ENCODE measurements at regions of chr15 and their contacts with region 1.

Region 1: GRCh38 chr15:73240866-73241499 is 127.8 kb downstream of the HCN4 start:
- DNase-seq: peak; percentile 92
- H3K4me3 Mint-ChIP-seq: no peak overlapping the region
- H3K27ac Mint-ChIP-seq: no peak overlapping the region
- H3K4me1 Mint-ChIP-seq: peaks cover 3% of the 10 kb centered on the region
- H3K27me3 Mint-ChIP-seq: peaks cover 1% of the 10 kb centered on the region

Region 2: DNA sequence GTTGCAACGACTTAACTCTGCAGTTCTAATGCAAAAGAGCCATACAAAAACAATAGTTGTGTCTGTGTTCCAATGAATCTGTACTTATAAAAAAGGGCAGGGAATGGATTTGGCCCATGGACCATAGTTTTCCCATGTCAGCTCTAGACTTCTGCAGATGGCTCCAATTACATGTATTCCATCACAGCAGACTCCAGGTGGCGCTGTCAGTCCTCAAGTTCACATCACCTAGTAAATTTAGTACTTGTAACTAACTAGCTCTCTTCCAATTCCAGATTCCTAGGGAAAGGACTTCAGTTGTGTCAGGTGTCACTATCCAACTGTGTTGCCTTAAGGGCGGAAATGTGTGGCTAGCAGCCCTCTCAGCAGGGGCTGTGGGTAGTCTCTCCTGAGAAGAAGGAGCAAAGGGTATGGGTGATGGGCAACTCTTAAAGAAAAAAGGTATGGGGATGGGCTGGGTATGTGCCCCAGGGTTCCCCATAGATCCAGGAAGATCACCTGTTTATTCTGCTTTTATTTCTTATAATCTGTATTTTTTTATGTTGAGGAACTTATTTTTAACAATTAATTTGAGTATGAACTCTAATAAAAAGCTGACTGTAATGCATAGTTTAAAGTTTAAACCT is 518.8 kb before region 1 on chr15:
- intact Hi-C with region 1: loop called (anchors 5 kb)
- DNase-seq: peak; percentile 90
- H3K4me3 Mint-ChIP-seq: no peak overlapping the region
- H3K27ac Mint-ChIP-seq: no peak overlapping the region
- H3K4me1 Mint-ChIP-seq: no peaks in the 10 kb centered on the region
- H3K27me3 Mint-ChIP-seq: no peaks in the 10 kb centered on the region

Region 3: GRCh38 chr15:73127301-73127936 is 113.6 kb before region 1 on chr15:
- intact Hi-C with region 1: loop called (anchors 10 kb)
- DNase-seq: peak; percentile 73
- H3K4me3 Mint-ChIP-seq: no peak overlapping the region
- H3K27ac Mint-ChIP-seq: no peak overlapping the region
- H3K4me1 Mint-ChIP-seq: no peaks in the 10 kb centered on the region
- H3K27me3 Mint-ChIP-seq: no peaks in the 10 kb centered on the region

Region 4: DNA sequence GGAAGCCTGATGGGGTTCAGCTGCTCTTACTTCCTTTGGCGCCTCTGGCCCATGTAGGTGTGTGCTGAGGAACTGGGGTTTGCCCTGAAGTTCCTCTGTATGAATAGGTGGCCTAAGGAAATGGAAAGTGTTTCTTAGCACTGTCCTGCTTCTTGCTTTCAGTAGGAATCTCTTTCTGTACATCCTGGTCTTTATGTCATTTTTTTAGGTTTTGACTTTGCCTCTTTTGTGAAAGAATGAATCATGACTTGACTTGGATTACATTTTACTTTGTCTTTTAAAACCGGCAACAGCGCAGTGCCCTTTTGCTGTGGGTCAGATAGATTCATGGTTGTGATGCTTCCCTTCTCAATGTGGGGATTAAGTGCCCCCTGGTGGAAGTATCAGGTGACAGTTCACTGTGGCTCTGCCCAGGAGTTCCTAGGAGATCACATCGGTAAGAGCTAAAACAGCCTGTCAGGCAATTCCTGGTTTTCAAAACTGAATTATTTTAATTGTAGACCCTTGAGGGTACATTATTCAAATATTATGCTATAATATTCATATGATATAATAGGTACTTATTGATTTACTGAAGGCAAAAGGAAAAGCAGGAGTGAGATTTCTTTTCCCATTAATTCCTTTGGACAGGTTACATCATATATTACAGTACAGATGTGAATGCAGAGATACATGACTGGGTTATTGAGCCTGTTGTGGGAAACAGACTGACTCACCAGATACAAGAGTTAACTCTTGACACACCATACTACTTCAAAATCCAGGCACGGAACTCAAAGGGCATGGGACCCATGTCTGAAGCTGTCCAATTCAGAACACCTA is 32.4 kb after region 1 on chr15:
- intact Hi-C with region 1: loop called (anchors 1 kb)
- DNase-seq: peak; percentile 83
- H3K4me3 Mint-ChIP-seq: no peak overlapping the region
- H3K27ac Mint-ChIP-seq: no peak overlapping the region
- H3K4me1 Mint-ChIP-seq: peaks cover 4% of the 10 kb centered on the region
- H3K27me3 Mint-ChIP-seq: no peaks in the 10 kb centered on the region

Region 5: DNA sequence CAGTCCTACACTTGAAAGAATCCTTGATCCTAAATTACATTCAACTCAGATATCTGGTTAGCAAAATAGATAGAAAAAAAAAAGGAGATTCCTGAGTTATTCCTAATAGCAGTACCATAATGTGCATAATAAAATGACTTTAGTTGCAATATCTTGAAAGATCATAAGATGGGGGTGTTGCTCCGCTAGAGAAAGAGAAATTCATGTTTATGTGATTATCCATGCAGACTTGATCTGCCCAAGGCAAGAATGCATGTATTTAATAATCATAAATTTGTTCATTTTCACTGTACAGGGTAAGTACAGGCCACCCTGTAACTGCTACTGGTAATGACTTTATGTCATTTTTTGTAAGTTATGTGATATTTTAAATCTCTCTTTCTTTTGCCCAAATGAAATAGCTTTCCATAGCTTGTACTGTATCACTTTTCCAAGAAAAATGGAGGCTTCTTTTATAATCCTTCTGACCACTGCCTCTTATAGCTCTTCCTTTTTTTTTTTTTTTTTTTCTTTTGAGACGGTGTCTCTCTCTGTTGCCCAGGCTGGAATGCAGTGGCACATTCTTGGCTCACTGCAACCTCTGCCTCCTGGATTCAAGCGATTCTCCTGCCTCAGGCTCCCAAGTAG is 43.2 kb after region 1 on chr15:
- intact Hi-C with region 1: no loop called
- DNase-seq: no peak
- H3K4me3 Mint-ChIP-seq: no peak overlapping the region
- H3K27ac Mint-ChIP-seq: no peak overlapping the region
- H3K4me1 Mint-ChIP-seq: peaks cover 7% of the 10 kb centered on the region
- H3K27me3 Mint-ChIP-seq: no peaks in the 10 kb centered on the region

Region 6: GRCh38 chr15:73560501-73561117 is 319.6 kb after region 1 on chr15:
- intact Hi-C with region 1: loop called (anchors 5 kb)
- DNase-seq: peak; percentile 76
- H3K4me3 Mint-ChIP-seq: no peak overlapping the region
- H3K27ac Mint-ChIP-seq: no peak overlapping the region
- H3K4me1 Mint-ChIP-seq: peaks cover 5% of the 10 kb centered on the region
- H3K27me3 Mint-ChIP-seq: no peaks in the 10 kb centered on the region